Heart left ventricle (tissue), 16 donors: ENCODE measurements at regions of chr6 and their contacts with region 1.

Region 1: GRCh38 chr6:122033539-122034181 is 365.8 kb upstream of the HSF2 start:
- DNase-seq: no peak
- ATAC-seq: peak; percentile 71 to 90 (median 86)
- H3K4me3 ChIP-seq: no peak overlapping the region
- H3K27ac ChIP-seq: peak overlapping the region in 3 of 12 donors; percentile 6 to 30 (median 9)
- H3K4me1 ChIP-seq: peaks cover 0 to 8% (median 0%) of the 10 kb centered on the region in 12 donors
- H3K27me3 ChIP-seq: no peaks in the 10 kb centered on the region
- CTCF ChIP-seq: peak; percentile 48 to 77 (median 63)
- POLR2A ChIP-seq: no peak

Region 2: GRCh38 chr6:121334299-121335086 is 699.2 kb before region 1 on chr6 and contains the start of gene TBC1D32:
- intact Hi-C with region 1: loop called in 1 of 10 experiments (anchors 10 kb)
- DNase-seq: peak; percentile 91 to 96 (median 94)
- ATAC-seq: peak; percentile 99 to 100 (median 100)
- H3K4me3 ChIP-seq: peak within 1 kb of the TSS; percentile 12 to 87 (median 68)
- H3K27ac ChIP-seq: peak within 1 kb of the TSS; percentile 70 to 98 (median 92)
- H3K4me1 ChIP-seq: peaks cover 0 to 12% (median 2%) of the 10 kb centered on the region in 12 donors
- H3K27me3 ChIP-seq: no peaks in the 10 kb centered on the region
- CTCF ChIP-seq: peak in 1 of 12 donors; percentile 12
- POLR2A ChIP-seq: peak in 1 of 2 donors; percentile 52
- total RNA-seq, gene TBC1D32: 1.0 to 4.6 (median 3.4) TPM

Region 3: GRCh38 chr6:121856296-121856695 is 177.4 kb before region 1 on chr6:
- intact Hi-C with region 1: loop called in 4 of 10 experiments (anchors 5 to 10 kb)
- DNase-seq: no peak
- ATAC-seq: no peak
- H3K4me3 ChIP-seq: no peak overlapping the region
- H3K27ac ChIP-seq: no peak overlapping the region
- H3K4me1 ChIP-seq: peaks cover 0 to 5% (median 0%) of the 10 kb centered on the region in 12 donors
- H3K27me3 ChIP-seq: no peaks in the 10 kb centered on the region
- CTCF ChIP-seq: no peak
- POLR2A ChIP-seq: no peak

Region 4: GRCh38 chr6:121917834-121918559 is 115.7 kb before region 1 on chr6:
- intact Hi-C with region 1: no loop called
- DNase-seq: no peak
- ATAC-seq: no peak
- H3K4me3 ChIP-seq: no peak overlapping the region
- H3K27ac ChIP-seq: no peak overlapping the region
- H3K4me1 ChIP-seq: no peaks in the 10 kb centered on the region
- H3K27me3 ChIP-seq: no peaks in the 10 kb centered on the region
- CTCF ChIP-seq: no peak
- POLR2A ChIP-seq: no peak

Region 5: DNA sequence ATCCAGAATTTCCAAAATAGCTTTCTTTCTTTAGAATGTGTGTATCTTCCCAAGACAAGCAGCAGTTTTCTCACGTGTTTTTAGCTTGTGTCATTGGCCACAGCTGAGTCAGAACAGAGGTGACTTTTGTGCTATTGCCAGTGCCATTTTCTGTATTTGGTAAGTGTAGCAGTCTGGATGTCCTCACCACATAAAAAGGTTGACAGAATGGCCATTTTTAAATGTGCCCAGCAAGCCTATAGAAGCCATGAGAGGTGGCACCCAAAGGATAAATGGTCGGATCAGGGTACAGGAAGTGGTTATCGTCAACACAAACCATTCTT is 96.3 kb after region 1 on chr6:
- intact Hi-C with region 1: no loop called
- DNase-seq: peak in 4 of 5 donors; percentile 31 to 39 (median 38)
- ATAC-seq: peak; percentile 75 to 87 (median 82)
- H3K4me3 ChIP-seq: no peak overlapping the region
- H3K27ac ChIP-seq: peak overlapping the region; percentile 57 to 91 (median 80)
- H3K4me1 ChIP-seq: peaks cover 0 to 23% (median 0%) of the 10 kb centered on the region in 12 donors
- H3K27me3 ChIP-seq: no peaks in the 10 kb centered on the region
- CTCF ChIP-seq: no peak
- POLR2A ChIP-seq: no peak

Region 6: GRCh38 chr6:122184401-122184827 is 150.8 kb after region 1 on chr6:
- intact Hi-C with region 1: loop called in 7 of 10 experiments (anchors 5 to 10 kb)
- DNase-seq: no peak
- ATAC-seq: peak; percentile 51 to 83 (median 74)
- H3K4me3 ChIP-seq: peak overlapping the region in 7 of 12 donors; percentile 22 to 43 (median 34)
- H3K27ac ChIP-seq: no peak overlapping the region
- H3K4me1 ChIP-seq: peaks cover 0 to 10% (median 0%) of the 10 kb centered on the region in 12 donors
- H3K27me3 ChIP-seq: no peaks in the 10 kb centered on the region
- CTCF ChIP-seq: peak; percentile 16 to 61 (median 49)
- POLR2A ChIP-seq: no peak

Region 7: DNA sequence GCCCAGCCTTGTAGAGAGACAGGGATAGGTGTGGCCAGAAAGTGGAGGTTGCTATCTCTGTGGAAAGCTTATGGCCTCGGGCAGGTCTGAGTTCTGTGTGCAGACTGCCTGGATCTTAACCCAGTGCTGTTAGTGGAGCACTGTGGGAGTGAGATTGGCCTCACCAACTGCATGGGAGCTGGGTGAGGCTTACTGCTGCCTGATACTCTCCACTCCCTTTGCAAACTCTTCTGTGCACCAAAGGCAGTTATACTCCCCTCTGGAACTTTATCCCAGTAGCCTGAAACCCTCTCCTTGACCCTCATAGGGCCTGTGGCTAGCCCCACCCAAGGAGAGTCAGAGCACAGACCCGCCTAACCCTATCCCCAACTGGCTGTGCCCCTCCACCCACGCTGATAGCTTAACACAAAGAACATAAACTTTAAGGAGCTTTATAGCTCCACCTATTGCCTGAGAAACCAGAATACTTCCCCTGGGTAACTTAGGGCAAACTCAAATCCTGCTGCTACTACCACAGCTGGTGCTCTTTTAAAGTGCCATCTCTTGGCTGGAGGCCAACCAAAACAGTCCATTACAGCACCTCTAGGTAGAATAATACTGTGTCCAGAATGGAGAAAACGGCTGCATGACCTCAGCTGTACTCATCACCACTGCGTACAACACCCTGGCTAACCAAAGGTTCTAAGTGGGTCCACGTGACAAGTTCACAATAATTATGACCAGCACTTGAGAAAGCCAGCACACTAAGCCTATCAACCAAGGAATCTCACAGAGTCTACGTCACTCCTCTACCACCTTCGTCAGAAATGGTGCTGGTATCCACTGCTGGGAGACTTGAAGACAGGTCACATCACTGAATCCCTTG is 535.4 kb after region 1 on chr6:
- intact Hi-C with region 1: no loop called
- DNase-seq: no peak
- ATAC-seq: peak in 1 of 4 donors; percentile 20
- H3K4me3 ChIP-seq: no peak overlapping the region
- H3K27ac ChIP-seq: no peak overlapping the region
- H3K4me1 ChIP-seq: no peaks in the 10 kb centered on the region
- H3K27me3 ChIP-seq: peaks cover 0 to 6% (median 0%) of the 10 kb centered on the region in 9 donors
- CTCF ChIP-seq: no peak
- POLR2A ChIP-seq: no peak

Region 8: GRCh38 chr6:122809001-122809400 is 775.3 kb after region 1 on chr6:
- intact Hi-C with region 1: no loop called
- DNase-seq: no peak
- ATAC-seq: no peak
- H3K4me3 ChIP-seq: no peak overlapping the region
- H3K27ac ChIP-seq: no peak overlapping the region
- H3K4me1 ChIP-seq: no peaks in the 10 kb centered on the region
- H3K27me3 ChIP-seq: no peaks in the 10 kb centered on the region
- CTCF ChIP-seq: no peak
- POLR2A ChIP-seq: no peak